ENCODE measurements at regions of chr10 and their contacts with region 1.

Region 1: DNA sequence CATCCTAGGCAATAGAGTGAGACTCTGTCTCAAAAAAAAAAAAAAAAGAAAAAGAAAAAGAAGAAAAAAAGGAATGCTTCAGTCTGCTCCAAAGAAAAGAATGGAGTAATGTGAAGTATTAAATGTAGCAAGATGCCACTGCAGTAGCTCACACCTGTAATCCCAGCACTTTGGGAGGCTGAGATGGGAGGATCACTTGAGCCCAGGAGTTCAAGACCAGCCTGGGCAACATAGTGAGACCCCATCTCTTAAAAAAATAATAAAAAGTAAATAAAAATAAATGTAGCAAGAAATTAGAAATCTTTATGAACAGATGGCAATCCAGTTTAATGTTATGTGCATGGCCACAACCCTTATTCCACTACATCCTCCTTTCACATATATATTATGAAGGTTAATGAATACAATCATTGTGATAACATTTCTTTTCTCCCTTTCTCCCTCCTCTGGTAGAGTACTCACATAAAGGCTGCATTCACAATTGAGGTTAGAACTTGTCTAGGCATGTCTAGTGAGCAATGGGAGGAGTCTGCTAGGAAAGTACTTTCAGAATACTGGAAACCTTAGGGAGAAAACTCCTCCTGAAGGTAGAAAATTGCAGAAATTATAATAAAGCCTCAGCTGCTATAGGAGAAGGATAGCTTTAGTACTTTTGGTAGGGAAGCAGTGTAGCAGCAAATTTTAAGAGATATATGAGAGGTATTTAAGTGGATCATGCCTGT is 20.4 kb downstream of the KLLN start:
- DNase-seq: no peak
- H3K4me3 ChIP-seq: no peak overlapping the region
- H3K4me3 Mint-ChIP-seq: peak overlapping the region; percentile 52
- H3K27ac Mint-ChIP-seq: peak overlapping the region; percentile 93
- H3K4me1 ChIP-seq: peaks cover 38% of the 10 kb centered on the region
- H3K4me1 Mint-ChIP-seq: peaks cover 23% of the 10 kb centered on the region
- H3K27me3 ChIP-seq: no peaks in the 10 kb centered on the region
- H3K27me3 Mint-ChIP-seq: no peaks in the 10 kb centered on the region
- CTCF ChIP-seq: no peak

Region 2: GRCh38 chr10:87798082-87798481 is 44.9 kb before region 1 on chr10:
- CTCF ChIA-PET with region 1: no interaction called
- POLR2A ChIA-PET with region 1: no interaction called
- intact Hi-C with region 1: loop called (anchors 1 kb)
- DNase-seq: no peak
- H3K4me3 ChIP-seq: no peak overlapping the region
- H3K4me3 Mint-ChIP-seq: no peak overlapping the region
- H3K27ac Mint-ChIP-seq: no peak overlapping the region
- H3K4me1 ChIP-seq: peaks cover 23% of the 10 kb centered on the region
- H3K4me1 Mint-ChIP-seq: peaks cover 4% of the 10 kb centered on the region
- H3K27me3 ChIP-seq: no peaks in the 10 kb centered on the region
- H3K27me3 Mint-ChIP-seq: no peaks in the 10 kb centered on the region
- CTCF ChIP-seq: no peak

Region 3: DNA sequence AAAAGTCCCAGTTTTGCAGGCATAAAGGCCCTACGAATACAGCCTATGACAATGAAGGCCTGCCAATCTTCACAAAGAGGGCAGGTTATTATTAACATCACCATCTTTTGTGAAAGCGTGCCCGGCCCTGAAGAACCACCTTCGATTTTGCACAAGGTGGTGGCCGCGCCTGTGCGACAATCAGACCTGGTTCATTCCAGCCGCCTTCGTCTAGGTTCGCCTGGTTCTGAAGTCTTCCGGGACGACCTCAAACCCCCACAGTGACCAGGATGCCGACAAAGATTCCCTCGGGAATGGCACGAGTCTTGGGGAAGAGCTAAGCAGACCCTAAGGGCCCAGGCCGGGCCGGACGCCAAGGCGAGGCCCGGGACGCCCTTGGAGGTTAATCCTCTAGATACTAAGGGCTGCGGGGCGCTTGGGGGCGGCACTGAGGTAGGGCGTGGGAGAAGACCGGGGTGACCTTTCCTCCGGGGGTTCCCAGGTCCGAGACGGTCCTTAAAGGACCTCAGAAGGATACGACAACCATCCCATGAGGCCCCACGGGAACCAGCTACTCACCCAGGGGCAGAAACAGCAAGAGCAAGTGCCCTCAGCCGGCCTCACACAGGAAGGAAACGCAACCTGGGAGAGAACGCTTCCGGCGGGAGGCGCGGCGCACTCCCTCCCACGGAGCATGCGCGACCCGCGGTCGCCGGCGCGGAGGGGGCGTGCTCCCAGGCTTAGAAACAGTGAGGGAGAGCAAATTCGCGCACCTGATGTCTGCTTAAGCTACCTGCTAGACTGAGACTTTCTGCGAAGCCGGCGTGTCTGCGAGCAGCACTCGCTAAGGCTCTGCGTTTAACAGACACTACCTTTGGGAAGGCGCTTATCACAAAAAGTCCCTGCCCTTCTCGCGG is 25.1 kb before region 1 on chr10 and contains the start of gene ATAD1:
- CTCF ChIA-PET with region 1: no interaction called
- POLR2A ChIA-PET with region 1: interaction called, 4 read pairs
- intact Hi-C with region 1: loop called (anchors 1 kb)
- DNase-seq: peak; percentile 91 to 92
- H3K4me3 ChIP-seq: peak within 1 kb of the TSS; percentile 66
- H3K4me3 Mint-ChIP-seq: peak within 1 kb of the TSS; percentile 99
- H3K27ac Mint-ChIP-seq: peak within 1 kb of the TSS; percentile 96
- H3K4me1 ChIP-seq: peaks cover 24% of the 10 kb centered on the region
- H3K4me1 Mint-ChIP-seq: peaks cover 17% of the 10 kb centered on the region
- H3K27me3 ChIP-seq: no peaks in the 10 kb centered on the region
- H3K27me3 Mint-ChIP-seq: no peaks in the 10 kb centered on the region
- CTCF ChIP-seq: peak in 1 of 2 experiments; percentile 30
- total RNA-seq, gene ATAD1: 48.8 and 51.6 TPM in 2 replicates

Measured in Caco-2 (cell line).